ENCODE measurements at regions of chr6 and their contacts with region 1.

Region 1: GRCh38 chr6:149565527-149566409 is at the start of gene GINM1:
- DNase-seq: peak; percentile 98
- H3K27ac ChIP-seq: peak within 1 kb of the TSS; percentile 86
- CTCF ChIP-seq: peak; percentile 86

Region 2: GRCh38 chr6:148538261-148539190 is 1027.2 kb before region 1 on chr6:
- CTCF ChIA-PET with region 1: no interaction called
- POLR2A ChIA-PET with region 1: no interaction called
- DNase-seq: no peak
- H3K27ac ChIP-seq: no peak overlapping the region
- CTCF ChIP-seq: no peak

Region 3: DNA sequence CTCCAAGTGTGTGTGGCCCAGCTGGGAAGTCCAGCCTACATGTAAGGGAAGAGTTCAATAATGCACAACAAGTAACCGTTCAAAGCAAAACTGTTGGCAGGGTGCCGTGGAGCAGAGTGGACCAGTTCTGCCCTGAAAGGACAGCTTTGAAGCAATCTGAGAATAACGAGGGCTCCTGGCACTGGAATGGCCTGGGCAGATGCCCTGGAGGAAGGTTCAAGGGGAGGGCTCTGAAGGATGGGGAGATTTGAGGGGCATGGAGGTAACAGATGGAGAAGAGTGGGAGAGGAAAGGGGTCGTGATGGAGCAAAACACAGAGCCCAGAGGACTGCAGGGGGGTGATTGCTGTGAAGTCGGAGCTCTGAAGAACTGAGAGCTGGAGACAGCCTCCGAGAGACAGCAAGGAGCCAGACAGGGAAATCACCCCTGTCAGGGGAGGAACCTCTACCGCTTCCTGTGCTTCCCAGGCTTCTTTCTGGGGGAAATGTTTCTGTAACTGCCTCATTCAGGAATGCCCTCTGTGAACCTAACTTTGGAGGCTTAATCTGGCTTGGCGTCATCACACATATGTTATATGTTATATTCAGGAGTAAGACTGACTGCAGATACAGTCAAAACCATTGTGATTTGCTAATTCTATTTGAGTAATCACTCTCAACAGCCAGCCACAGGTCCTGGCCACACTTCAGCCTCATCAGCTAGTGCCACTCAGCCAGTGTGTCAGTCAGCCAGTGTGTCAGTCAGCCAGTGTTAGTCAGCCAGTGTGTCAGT is 122.2 kb before region 1 on chr6:
- CTCF ChIA-PET with region 1: no interaction called
- POLR2A ChIA-PET with region 1: no interaction called
- DNase-seq: no peak
- H3K27ac ChIP-seq: no peak overlapping the region
- CTCF ChIP-seq: no peak

Region 4: DNA sequence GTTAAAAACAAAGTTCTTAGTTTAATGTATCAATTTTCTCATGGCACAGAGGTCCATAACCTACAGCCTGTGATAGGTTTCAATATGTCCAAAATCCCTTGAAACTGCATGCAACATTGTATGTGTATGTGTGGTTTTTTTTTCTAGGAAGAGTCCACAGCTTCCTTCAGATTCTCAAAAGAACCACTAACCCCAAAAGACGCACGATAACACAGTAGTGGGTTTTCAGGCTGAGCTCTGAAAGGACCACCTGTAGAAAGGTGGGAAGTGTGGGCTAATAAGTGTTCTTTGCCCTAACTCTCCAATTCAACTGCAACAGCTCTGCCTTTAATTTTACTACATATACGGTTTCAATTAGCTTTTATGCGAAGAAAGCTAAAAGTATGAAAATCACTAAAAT is 94.3 kb after region 1 on chr6:
- CTCF ChIA-PET with region 1: interaction called, 3 read pairs
- POLR2A ChIA-PET with region 1: interaction called, 10 read pairs
- DNase-seq: no peak
- H3K27ac ChIP-seq: no peak overlapping the region
- CTCF ChIP-seq: no peak

Measured in RWPE1 (cell line).